ENCODE measurements at regions of chr15 and their contacts with region 1.

Region 1: GRCh38 chr15:83207622-83208411 is at the start of gene HDGFL3:
- DNase-seq: peak; percentile 59
- H3K4me3 ChIP-seq: peak within 1 kb of the TSS; percentile 91 to 95 (median 93)
- H3K27ac ChIP-seq: peak within 1 kb of the TSS; percentile 95
- H3K4me1 ChIP-seq: peaks cover 29% of the 10 kb centered on the region
- H3K27me3 ChIP-seq: no peaks in the 10 kb centered on the region
- CTCF ChIP-seq: peak in 1 of 2 donors; percentile 26
- POLR2A ChIP-seq: peak; percentile 47
- total RNA-seq, gene HDGFL3: 155 and 156 TPM in 2 replicates

Region 2: DNA sequence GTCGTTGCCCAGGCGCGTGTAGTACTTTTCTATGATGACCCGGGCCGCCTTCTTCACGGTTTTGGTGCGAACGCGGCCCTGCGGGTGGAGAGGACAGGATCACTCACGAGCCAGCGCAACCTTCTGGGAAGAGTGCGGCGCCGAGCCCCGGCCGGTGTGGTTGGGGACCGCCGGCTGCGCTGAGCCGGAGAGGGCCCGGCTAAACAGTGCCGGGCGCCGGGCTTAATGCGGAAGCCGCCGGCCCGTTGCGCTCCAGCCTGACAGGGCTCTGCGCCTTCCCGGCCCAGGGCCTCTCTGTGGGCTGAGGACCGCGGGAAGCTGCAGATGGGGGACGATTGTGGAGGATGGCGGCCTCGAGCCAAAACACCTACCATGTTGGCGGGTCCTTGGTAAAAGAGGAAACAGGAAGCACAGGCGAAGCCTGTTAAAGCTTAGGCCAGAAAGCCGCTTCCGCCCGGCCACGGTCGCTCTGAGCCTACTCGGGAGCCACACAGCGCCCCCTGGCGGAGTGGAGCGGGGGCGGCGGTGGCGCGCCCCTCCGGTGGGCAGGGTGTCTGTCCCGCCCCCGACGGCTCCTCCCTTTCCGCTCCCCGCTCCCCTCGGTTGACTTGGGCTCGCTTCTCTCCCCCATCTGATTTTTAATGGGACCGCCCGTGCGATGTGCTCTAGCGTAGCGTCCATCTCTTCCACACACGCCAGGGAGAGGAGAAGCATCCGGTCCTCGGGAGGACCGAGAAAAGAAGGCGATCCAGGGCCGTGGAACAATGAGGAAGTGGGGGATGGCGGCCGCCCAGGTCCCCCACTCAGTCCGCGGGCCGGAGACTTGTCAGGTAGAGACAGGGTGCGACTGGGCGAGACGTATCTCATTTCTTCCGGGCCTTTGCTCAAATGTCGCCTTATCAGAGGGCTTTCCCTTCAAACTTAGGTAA is 667.5 kb before region 1 on chr15 and contains the start of gene RPS17:
- CTCF ChIA-PET with region 1: no interaction called
- POLR2A ChIA-PET with region 1: interaction called, 4 read pairs
- dilution Hi-C with region 1: no loop called
- intact Hi-C with region 1: loop called (anchors 5 kb)
- DNase-seq: peak; percentile 94
- H3K4me3 ChIP-seq: peak within 1 kb of the TSS; percentile 73 to 87 (median 86)
- H3K27ac ChIP-seq: peak within 1 kb of the TSS; percentile 56
- H3K4me1 ChIP-seq: peaks cover 17% of the 10 kb centered on the region
- H3K27me3 ChIP-seq: peaks cover 4 to 11% of the 10 kb centered on the region in 2 experiments
- CTCF ChIP-seq: peak; percentile 100
- POLR2A ChIP-seq: peak; percentile 99
- total RNA-seq, gene RPS17: 1,599 and 1,690 TPM in 2 replicates

Region 3: GRCh38 chr15:82809404-82810060 is 398.3 kb before region 1 on chr15 and contains the start of gene WHAMM:
- CTCF ChIA-PET with region 1: no interaction called
- POLR2A ChIA-PET with region 1: interaction called, 10 read pairs
- dilution Hi-C with region 1: no loop called
- intact Hi-C with region 1: loop called (anchors 1 kb)
- DNase-seq: peak; percentile 98
- H3K4me3 ChIP-seq: peak within 1 kb of the TSS; percentile 76 to 90 (median 87)
- H3K27ac ChIP-seq: peak within 1 kb of the TSS; percentile 78
- H3K4me1 ChIP-seq: no peaks in the 10 kb centered on the region
- H3K27me3 ChIP-seq: peaks cover 0 to 4% of the 10 kb centered on the region in 2 experiments
- CTCF ChIP-seq: peak; percentile 4 to 10
- POLR2A ChIP-seq: peak; percentile 62
- total RNA-seq, gene WHAMM: 7.7 and 9.4 TPM in 2 replicates

Region 4: GRCh38 chr15:83066734-83067637 is 140.8 kb before region 1 on chr15 and contains the start of gene BTBD1:
- CTCF ChIA-PET with region 1: no interaction called
- POLR2A ChIA-PET with region 1: no interaction called
- dilution Hi-C with region 1: no loop called
- intact Hi-C with region 1: loop called (anchors 1 kb)
- DNase-seq: peak; percentile 93
- H3K4me3 ChIP-seq: peak within 1 kb of the TSS; percentile 75 to 99 (median 98)
- H3K27ac ChIP-seq: peak within 1 kb of the TSS; percentile 66
- H3K4me1 ChIP-seq: peaks cover 36% of the 10 kb centered on the region
- H3K27me3 ChIP-seq: no peaks in the 10 kb centered on the region
- CTCF ChIP-seq: peak in 1 of 2 donors; percentile 14
- POLR2A ChIP-seq: peak; percentile 95
- total RNA-seq, gene BTBD1: 56.9 and 58.0 TPM in 2 replicates

Region 5: DNA sequence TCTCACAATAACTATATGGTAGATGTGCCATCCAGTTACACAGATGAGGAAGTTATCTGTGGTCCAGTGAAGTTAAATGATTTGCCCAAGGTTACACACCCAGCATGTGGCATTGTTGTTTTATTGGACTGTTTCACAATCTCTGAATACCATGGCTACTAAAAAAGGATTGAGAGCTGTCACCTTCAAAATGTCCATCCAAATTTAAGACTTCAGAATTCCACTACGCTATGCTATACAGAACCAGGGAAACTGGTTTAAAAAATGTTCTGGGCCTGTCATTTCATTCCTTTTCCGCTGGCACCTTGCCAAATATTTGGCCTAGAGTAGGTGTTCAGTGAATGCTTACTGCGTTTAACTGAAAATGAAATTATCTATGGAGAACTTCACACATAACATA is 80.2 kb before region 1 on chr15:
- CTCF ChIA-PET with region 1: no interaction called
- POLR2A ChIA-PET with region 1: no interaction called
- dilution Hi-C with region 1: no loop called
- intact Hi-C with region 1: loop called (anchors 2 kb)
- DNase-seq: no peak
- H3K4me3 ChIP-seq: no peak overlapping the region
- H3K27ac ChIP-seq: no peak overlapping the region
- H3K4me1 ChIP-seq: no peaks in the 10 kb centered on the region
- H3K27me3 ChIP-seq: no peaks in the 10 kb centered on the region
- CTCF ChIP-seq: no peak
- POLR2A ChIP-seq: no peak

Region 6: GRCh38 chr15:83283138-83283812 is 75.5 kb after region 1 on chr15:
- CTCF ChIA-PET with region 1: no interaction called
- POLR2A ChIA-PET with region 1: no interaction called
- dilution Hi-C with region 1: no loop called
- intact Hi-C with region 1: loop called (anchors 2 kb)
- DNase-seq: peak; percentile 47
- H3K4me3 ChIP-seq: peak overlapping the region; percentile 57 to 81 (median 74)
- H3K27ac ChIP-seq: peak overlapping the region; percentile 25
- H3K4me1 ChIP-seq: peaks cover 31% of the 10 kb centered on the region
- H3K27me3 ChIP-seq: peaks cover 3 to 9% of the 10 kb centered on the region in 2 experiments
- CTCF ChIP-seq: no peak
- POLR2A ChIP-seq: no peak

Measured in endothelial cell of umbilical vein (primary cell).